ENCODE measurements at regions of chr5 and their contacts with region 1.

Region 1: GRCh38 chr5:114449860-114450421 is 88.1 kb downstream of the KCNN2 start:
- DNase-seq: peak; percentile 63
- H3K4me3 ChIP-seq: no peak overlapping the region
- H3K27ac ChIP-seq: no peak overlapping the region
- H3K4me1 ChIP-seq: no peaks in the 10 kb centered on the region
- H3K27me3 ChIP-seq: no peaks in the 10 kb centered on the region
- CTCF ChIP-seq: peak; percentile 81 to 85
- POLR2A ChIP-seq: no peak

Region 2: GRCh38 chr5:113806250-113806649 is 643.7 kb before region 1 on chr5:
- CTCF ChIA-PET with region 1: interaction called, 15 read pairs
- POLR2A ChIA-PET with region 1: no interaction called
- dilution Hi-C with region 1: no loop called
- intact Hi-C with region 1: loop called (anchors 1 kb)
- DNase-seq: peak; percentile 71
- H3K4me3 ChIP-seq: peak overlapping the region in 1 of 3 experiments; percentile 24
- H3K27ac ChIP-seq: peak overlapping the region; percentile 2
- H3K4me1 ChIP-seq: peaks cover 14% of the 10 kb centered on the region
- H3K27me3 ChIP-seq: no peaks in the 10 kb centered on the region
- CTCF ChIP-seq: peak; percentile 34 to 38
- POLR2A ChIP-seq: no peak

Region 3: GRCh38 chr5:114305402-114306211 is 144.3 kb before region 1 on chr5:
- CTCF ChIA-PET with region 1: interaction called, 4 read pairs
- POLR2A ChIA-PET with region 1: no interaction called
- dilution Hi-C with region 1: no loop called
- intact Hi-C with region 1: loop called (anchors 1 kb)
- DNase-seq: peak; percentile 41
- H3K4me3 ChIP-seq: no peak overlapping the region
- H3K27ac ChIP-seq: no peak overlapping the region
- H3K4me1 ChIP-seq: no peaks in the 10 kb centered on the region
- H3K27me3 ChIP-seq: peaks cover 4 to 5% of the 10 kb centered on the region in 2 experiments
- CTCF ChIP-seq: peak in 1 of 2 donors; percentile 32
- POLR2A ChIP-seq: no peak

Region 4: DNA sequence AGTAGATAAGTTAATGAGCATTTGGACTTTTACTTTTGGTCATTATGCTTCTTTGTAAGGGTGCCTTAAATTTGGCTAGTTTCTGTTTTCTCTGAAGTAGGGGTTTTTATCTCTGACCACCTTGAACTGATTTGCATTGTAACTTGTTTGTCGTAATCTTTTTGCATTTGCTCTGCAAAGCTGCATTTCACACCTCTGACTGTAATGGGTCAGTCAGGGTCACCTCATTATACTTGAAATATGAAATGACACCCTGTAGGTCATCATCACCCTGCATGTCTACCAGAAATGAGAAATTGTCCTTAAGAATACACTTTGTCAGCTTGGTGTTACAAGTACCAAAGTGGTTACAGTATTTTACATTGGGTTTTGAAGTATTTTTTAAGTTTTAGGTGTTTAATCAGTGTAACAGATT is 14.0 kb before region 1 on chr5:
- CTCF ChIA-PET with region 1: interaction called, 10 read pairs
- POLR2A ChIA-PET with region 1: no interaction called
- dilution Hi-C with region 1: no loop called
- intact Hi-C with region 1: no loop called
- DNase-seq: no peak
- H3K4me3 ChIP-seq: no peak overlapping the region
- H3K27ac ChIP-seq: no peak overlapping the region
- H3K4me1 ChIP-seq: no peaks in the 10 kb centered on the region
- H3K27me3 ChIP-seq: no peaks in the 10 kb centered on the region
- CTCF ChIP-seq: no peak
- POLR2A ChIP-seq: no peak

Region 5: DNA sequence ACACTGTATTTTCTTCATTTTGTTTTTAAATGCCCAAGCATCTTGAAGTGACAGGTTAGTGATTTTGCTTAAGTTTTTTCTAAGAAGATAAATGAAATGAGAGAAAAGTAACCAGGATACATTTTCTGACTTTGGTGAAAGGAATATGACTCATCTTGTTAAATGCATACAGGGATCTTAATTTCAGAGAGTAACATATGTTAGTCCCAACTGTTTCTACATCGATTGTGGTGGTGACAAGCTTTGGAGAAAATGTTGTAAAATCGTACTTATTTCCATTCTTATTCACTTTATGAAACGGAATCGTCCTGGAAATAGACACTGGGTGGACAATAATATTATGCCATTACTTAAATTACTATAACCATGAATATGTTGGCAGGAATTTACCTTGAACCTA is 19.4 kb after region 1 on chr5:
- CTCF ChIA-PET with region 1: no interaction called
- POLR2A ChIA-PET with region 1: no interaction called
- dilution Hi-C with region 1: no loop called
- intact Hi-C with region 1: no loop called
- DNase-seq: no peak
- H3K4me3 ChIP-seq: no peak overlapping the region
- H3K27ac ChIP-seq: no peak overlapping the region
- H3K4me1 ChIP-seq: no peaks in the 10 kb centered on the region
- H3K27me3 ChIP-seq: no peaks in the 10 kb centered on the region
- CTCF ChIP-seq: no peak
- POLR2A ChIP-seq: no peak

Region 6: DNA sequence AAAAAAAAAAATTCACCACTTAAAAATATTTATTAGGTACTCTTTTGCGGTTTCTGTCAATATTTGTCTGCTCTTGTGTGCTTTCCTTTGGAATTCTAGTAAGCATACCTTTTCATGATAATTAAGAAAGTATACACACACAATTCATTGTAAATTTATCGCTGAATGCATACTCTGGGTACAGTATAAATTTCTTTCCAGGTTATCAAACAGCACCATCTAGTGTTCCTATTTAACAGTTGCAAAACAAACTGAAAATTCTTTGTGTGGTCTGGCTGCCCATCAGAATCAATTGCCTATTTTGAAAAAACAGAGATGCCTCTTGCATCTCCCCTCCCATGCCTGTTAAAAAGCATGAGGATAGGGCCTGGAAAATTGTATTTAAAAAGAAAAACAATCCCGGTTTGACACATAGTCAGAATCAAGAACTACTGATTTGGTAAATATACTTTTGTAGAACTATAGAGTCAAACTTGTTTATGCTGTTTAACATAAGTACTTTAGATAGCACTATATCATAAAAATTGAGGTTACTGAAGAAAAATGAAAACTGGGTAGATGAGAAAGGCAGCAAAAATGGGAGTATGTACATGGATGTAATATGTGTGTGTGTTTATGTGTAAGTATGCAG is 796.5 kb after region 1 on chr5:
- CTCF ChIA-PET with region 1: interaction called, 4 read pairs
- POLR2A ChIA-PET with region 1: no interaction called
- dilution Hi-C with region 1: no loop called
- intact Hi-C with region 1: loop called (anchors 2 kb)
- DNase-seq: peak; percentile 49
- H3K4me3 ChIP-seq: no peak overlapping the region
- H3K27ac ChIP-seq: no peak overlapping the region
- H3K4me1 ChIP-seq: no peaks in the 10 kb centered on the region
- H3K27me3 ChIP-seq: no peaks in the 10 kb centered on the region
- CTCF ChIP-seq: peak; percentile 34 to 37
- POLR2A ChIP-seq: no peak

Measured in endothelial cell of umbilical vein (primary cell).